ENCODE measurements at regions of chr19 and their contacts with region 1.

Region 1: DNA sequence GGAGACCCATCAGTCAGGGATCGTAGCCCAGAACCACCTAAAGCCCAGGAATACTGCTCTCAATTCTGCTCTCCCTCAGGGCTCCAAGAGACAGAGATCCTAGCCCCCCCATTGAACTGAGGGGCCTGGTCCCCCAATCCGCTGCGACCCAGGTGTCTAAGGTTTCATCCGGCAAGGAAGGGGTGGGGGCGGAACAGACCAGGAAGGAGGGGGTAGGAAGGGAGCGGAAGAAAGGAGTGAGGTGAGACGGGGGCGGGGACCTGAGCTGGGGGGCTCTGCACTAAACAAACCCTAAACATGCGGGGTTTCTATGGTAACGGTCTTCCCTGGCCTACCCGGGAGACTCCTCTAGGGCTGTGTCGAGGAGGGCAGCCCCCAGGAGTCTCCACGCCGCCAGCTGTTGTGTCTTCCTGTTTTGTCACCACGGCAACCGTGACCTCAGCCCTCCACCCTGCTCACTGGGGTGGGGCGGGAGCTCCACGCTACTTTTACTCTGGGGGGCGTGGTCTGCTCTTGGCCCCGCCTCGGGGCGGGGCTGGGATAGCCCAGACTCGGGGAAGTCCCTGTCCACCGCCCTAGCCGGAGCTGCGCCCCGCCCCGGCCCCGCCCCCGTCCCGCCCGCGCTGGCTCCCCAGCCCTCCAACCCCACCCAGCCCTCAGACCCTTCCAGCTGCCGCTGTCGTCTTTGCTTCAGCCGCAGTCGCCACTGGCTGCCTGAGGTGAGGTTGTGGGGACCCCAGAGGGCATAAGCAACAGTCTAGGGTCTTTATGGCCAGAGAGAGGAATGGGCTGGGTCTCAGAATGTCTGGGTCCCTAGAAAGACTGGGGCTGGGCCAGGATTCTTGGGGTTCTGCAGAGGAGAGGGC is at the start of gene MYADM:
- DNase-seq: peak; percentile 99
- H3K4me3 ChIP-seq: peak within 1 kb of the TSS; percentile 99
- H3K4me3 Mint-ChIP-seq: peak within 1 kb of the TSS; percentile 97
- H3K27ac Mint-ChIP-seq: peak within 1 kb of the TSS; percentile 100
- H3K4me1 ChIP-seq: peaks cover 37% of the 10 kb centered on the region
- H3K4me1 Mint-ChIP-seq: peaks cover 38% of the 10 kb centered on the region
- H3K27me3 ChIP-seq: no peaks in the 10 kb centered on the region
- H3K27me3 Mint-ChIP-seq: no peaks in the 10 kb centered on the region
- CTCF ChIP-seq: no peak
- total RNA-seq, gene MYADM: 115 and 132 TPM in 2 replicates

Region 2: DNA sequence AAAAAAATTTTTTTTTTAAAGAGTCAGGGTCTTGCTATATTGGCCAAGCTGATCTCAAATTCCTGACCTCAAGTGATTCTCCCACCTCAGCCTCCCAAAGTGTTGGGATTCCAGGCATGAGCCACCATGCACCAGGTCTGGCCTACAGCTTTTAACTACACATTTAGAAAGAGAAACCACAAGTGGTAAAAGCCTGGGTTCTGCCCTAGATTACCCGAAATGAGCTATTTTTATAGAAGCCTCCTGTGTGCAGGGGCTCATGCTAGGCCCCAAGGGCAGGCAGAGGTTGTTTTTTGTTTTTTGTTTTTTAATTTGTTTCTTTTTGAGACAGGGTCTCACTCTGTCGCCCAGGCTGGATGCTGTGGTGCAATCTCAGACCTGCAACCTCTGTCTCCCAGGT is 13.8 kb before region 1 on chr19:
- CTCF ChIA-PET with region 1: no interaction called
- POLR2A ChIA-PET with region 1: interaction called, 3 read pairs
- intact Hi-C with region 1: loop called (anchors 1 kb)
- DNase-seq: no peak
- H3K4me3 ChIP-seq: no peak overlapping the region
- H3K4me3 Mint-ChIP-seq: no peak overlapping the region
- H3K27ac Mint-ChIP-seq: no peak overlapping the region
- H3K4me1 ChIP-seq: no peaks in the 10 kb centered on the region
- H3K4me1 Mint-ChIP-seq: peaks cover 12% of the 10 kb centered on the region
- H3K27me3 ChIP-seq: no peaks in the 10 kb centered on the region
- H3K27me3 Mint-ChIP-seq: no peaks in the 10 kb centered on the region
- CTCF ChIP-seq: no peak

Region 3: GRCh38 chr19:53958168-53958571 is 90.7 kb after region 1 on chr19:
- CTCF ChIA-PET with region 1: no interaction called
- POLR2A ChIA-PET with region 1: no interaction called
- intact Hi-C with region 1: no loop called
- DNase-seq: no peak
- H3K4me3 ChIP-seq: no peak overlapping the region
- H3K4me3 Mint-ChIP-seq: no peak overlapping the region
- H3K27ac Mint-ChIP-seq: no peak overlapping the region
- H3K4me1 ChIP-seq: no peaks in the 10 kb centered on the region
- H3K4me1 Mint-ChIP-seq: no peaks in the 10 kb centered on the region
- H3K27me3 ChIP-seq: no peaks in the 10 kb centered on the region
- H3K27me3 Mint-ChIP-seq: peaks cover 18% of the 10 kb centered on the region
- CTCF ChIP-seq: no peak

Measured in Caco-2 (cell line).